Posterior vena cava (tissue), 2 donors: ENCODE measurements at regions of chr6 and their contacts with region 1.

Region 1: GRCh38 chr6:135254461-135254860 is 73.4 kb downstream of the MYB start:
- DNase-seq: no peak

Region 2: GRCh38 chr6:135212020-135212806 is 42.2 kb before region 1 on chr6:
- intact Hi-C with region 1: no loop called
- DNase-seq: no peak

Region 3: DNA sequence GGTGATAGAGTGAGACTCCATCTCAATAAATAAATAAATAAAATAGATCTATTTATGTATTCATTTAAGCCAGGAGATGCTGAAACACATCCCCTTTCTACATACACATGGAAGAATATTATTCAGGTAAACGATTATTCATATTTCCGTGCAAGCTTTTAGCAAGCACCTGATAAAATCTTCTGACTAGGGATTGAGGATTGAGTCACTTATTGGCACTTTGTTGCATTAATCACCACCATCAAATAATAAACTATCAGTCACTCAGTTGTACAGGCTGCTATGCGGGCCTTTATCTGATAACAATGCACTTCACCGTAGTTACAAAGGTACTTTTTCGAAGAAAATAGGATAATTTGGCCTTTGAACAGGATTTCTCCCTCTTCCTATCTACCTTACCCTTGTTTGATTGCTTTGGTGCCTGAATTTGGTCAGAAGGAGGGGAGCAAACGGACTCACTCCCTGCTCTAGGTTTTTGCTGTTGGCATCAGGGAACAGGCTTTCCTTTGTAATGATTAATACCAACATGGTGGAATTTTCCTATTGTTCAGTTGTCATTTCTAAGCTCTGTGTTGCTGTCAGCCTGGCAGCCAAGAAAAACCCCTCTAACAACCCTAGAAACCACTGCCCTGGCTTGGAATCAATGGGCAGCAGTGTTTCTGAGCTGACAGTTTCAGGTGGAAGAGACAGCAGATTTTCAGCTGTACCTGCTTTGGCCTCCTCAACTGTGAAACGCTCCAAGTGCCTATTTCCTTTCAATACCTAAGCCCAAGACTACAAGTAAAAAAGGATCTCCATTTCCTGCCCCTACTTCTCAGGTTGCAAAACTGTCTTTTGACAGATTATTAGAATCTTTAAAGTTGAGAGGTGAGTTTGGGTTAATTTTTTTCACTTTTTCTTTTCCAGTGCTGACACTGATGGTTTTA is 10.3 kb before region 1 on chr6:
- intact Hi-C with region 1: loop called in 1 of 2 experiments (anchors 1 kb)
- DNase-seq: no peak